Uterus (tissue), 4 donors: ENCODE measurements at regions of chr22 and their contacts with region 1.

Region 1: GRCh38 chr22:37566903-37567820 is 6.9 kb downstream of the CDC42EP1 start:
- DNase-seq: peak; percentile 85
- H3K4me3 ChIP-seq: no peak overlapping the region
- H3K27ac ChIP-seq: peak overlapping the region; percentile 71 to 99
- H3K4me1 ChIP-seq: peaks cover 28 to 36% of the 10 kb centered on the region in 2 donors
- H3K27me3 ChIP-seq: no peaks in the 10 kb centered on the region
- CTCF ChIP-seq: peak; percentile 95 to 98 (median 96)
- POLR2A ChIP-seq: peak in 1 of 2 donors; percentile 30

Region 2: DNA sequence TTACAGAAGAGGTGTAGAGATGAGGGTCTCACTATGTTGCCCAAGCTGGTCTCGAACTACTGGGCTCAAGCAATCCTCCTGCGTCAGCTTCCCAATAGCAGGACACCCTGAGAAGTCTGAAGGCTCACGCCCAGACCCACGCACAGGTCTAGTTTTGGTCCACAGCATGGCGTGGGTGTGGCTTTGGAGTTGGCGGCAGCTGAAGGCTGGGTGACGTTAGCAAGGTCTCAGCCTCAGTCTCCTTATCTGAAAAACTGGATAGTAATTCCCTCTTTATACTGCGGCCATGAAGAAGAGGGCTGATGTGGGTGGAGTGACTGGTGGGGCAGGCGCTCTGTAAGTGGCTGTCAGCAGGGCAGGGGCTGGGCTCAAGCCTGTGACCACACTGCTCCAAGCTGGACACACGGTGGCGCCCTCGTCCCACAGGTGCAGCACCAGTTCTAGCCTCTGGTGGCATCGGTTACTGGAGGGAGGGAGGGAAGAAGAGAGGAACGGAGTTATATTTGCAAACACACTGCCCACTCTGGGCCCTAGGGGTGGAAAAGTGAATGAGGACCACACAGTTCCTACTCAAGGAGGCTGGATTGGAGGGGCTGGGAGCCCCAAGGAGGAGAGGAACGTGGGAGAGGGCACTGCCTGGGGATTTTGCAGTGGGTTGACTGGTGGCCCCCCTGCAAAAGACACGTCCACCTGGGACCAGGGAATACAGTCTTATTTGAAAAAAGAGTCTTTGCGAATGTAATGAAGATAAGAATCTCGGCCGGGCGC is 28.4 kb before region 1 on chr22:
- intact Hi-C with region 1: loop called (anchors 2 kb)
- DNase-seq: peak; percentile 92 to 94
- H3K4me3 ChIP-seq: no peak overlapping the region
- H3K27ac ChIP-seq: no peak overlapping the region
- H3K4me1 ChIP-seq: no peaks in the 10 kb centered on the region
- H3K27me3 ChIP-seq: no peaks in the 10 kb centered on the region
- CTCF ChIP-seq: peak; percentile 93 to 100 (median 98)
- POLR2A ChIP-seq: peak in 1 of 2 donors; percentile 44